Calu3 (cell line): ENCODE measurements at regions of chr2 and their contacts with region 1.

Region 1: GRCh38 chr2:233443468-233444183 is 89.3 kb downstream of the DGKD start:
- DNase-seq: peak; percentile 84
- H3K4me3 Mint-ChIP-seq: no peak overlapping the region
- H3K27ac Mint-ChIP-seq: no peak overlapping the region
- H3K4me1 Mint-ChIP-seq: peaks cover 13% of the 10 kb centered on the region
- H3K27me3 Mint-ChIP-seq: no peaks in the 10 kb centered on the region
- CTCF ChIP-seq: peak; percentile 83

Region 2: DNA sequence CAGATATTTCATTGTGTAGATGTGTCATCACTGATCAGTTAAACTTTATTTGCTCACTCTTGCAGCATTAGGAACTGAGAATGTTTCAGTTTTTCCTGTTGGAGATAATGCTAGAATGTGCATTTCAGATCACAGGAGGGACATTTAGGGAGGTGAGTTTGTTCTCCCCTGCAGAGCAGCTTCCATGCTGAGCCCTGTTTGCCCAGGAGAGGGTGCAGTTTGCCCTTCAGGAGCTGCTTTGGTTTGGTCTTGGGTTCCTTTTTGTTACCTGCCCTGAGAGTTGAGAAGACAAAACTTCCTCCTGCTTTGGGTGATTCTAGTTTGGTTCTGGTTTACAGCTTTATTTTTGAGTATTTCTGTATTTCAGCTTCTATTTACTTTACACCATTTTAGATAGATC is 39.4 kb before region 1 on chr2:
- CTCF ChIA-PET with region 1: interaction called, 33 read pairs
- intact Hi-C with region 1: loop called (anchors 1 kb)
- DNase-seq: peak; percentile 63
- H3K4me3 Mint-ChIP-seq: no peak overlapping the region
- H3K27ac Mint-ChIP-seq: peak overlapping the region; percentile 19
- H3K4me1 Mint-ChIP-seq: peaks cover 22% of the 10 kb centered on the region
- H3K27me3 Mint-ChIP-seq: no peaks in the 10 kb centered on the region
- CTCF ChIP-seq: peak; percentile 67

Region 3: GRCh38 chr2:233531888-233532458 is 88.3 kb after region 1 on chr2:
- CTCF ChIA-PET with region 1: no interaction called
- intact Hi-C with region 1: no loop called
- DNase-seq: no peak
- H3K4me3 Mint-ChIP-seq: no peak overlapping the region
- H3K27ac Mint-ChIP-seq: no peak overlapping the region
- H3K4me1 Mint-ChIP-seq: no peaks in the 10 kb centered on the region
- H3K27me3 Mint-ChIP-seq: no peaks in the 10 kb centered on the region
- CTCF ChIP-seq: no peak